Activated naive CD4-positive, alpha-beta T cell treated with anti-CD3 and anti-CD28 coated beads for 36 hours (primary cell): ENCODE measurements at regions of chr17 and their contacts with region 1.

Region 1: DNA sequence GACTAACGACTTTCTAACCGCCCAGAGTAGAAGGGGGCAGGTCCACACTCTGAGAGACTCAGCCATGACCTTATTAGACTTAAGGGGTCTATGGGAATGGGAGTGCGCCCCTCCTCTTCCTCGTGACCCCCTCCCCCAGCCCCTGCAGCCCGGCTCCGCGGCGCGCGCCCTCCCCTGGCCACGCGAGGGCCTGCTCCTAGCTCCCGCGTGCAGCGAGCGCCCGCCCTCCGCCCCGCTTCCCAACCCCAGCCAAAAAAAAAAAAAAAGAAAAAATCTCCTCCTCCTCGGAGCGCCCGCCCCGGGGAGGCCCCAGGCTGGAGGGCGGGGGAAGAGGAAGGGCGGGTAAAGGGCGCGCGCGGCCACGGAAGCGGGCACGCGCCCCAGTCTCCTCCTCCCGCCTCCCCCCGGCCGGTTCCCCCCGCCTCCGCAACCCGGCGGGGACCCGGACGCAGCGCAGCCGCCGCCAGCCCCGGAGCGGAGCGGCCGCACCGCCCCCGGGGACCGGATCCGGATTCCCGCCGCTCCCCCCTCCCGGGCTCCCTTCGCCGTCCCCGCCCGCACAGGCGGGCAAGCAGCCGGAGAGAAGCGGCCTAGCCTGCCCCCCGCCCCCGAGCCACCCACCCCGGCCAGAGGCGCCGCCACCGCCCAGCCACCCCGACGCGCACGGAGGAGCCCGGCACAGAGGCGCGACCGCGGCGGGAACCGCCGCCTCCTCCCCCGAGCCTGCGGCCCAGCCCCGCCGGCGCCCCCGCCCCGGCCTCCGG is 949 bp downstream of the UBTF start:
- DNase-seq: peak; percentile 89
- H3K4me3 Mint-ChIP-seq: peak overlapping the region; percentile 94
- H3K27ac Mint-ChIP-seq: peak overlapping the region; percentile 96
- H3K4me1 Mint-ChIP-seq: peaks cover 40% of the 10 kb centered on the region
- H3K27me3 Mint-ChIP-seq: no peaks in the 10 kb centered on the region

Region 2: GRCh38 chr17:42744806-42745617 is 1473.5 kb before region 1 on chr17 and contains the start of gene EZH1:
- CTCF ChIA-PET with region 1: no interaction called
- intact Hi-C with region 1: loop called (anchors 10 kb)
- DNase-seq: peak; percentile 93
- H3K4me3 Mint-ChIP-seq: peak within 1 kb of the TSS; percentile 90
- H3K27ac Mint-ChIP-seq: peak within 1 kb of the TSS; percentile 93
- H3K4me1 Mint-ChIP-seq: peaks cover 21% of the 10 kb centered on the region
- H3K27me3 Mint-ChIP-seq: peaks cover 6% of the 10 kb centered on the region
- total RNA-seq, gene EZH1: 31.9 to 34.0 TPM

Region 3: DNA sequence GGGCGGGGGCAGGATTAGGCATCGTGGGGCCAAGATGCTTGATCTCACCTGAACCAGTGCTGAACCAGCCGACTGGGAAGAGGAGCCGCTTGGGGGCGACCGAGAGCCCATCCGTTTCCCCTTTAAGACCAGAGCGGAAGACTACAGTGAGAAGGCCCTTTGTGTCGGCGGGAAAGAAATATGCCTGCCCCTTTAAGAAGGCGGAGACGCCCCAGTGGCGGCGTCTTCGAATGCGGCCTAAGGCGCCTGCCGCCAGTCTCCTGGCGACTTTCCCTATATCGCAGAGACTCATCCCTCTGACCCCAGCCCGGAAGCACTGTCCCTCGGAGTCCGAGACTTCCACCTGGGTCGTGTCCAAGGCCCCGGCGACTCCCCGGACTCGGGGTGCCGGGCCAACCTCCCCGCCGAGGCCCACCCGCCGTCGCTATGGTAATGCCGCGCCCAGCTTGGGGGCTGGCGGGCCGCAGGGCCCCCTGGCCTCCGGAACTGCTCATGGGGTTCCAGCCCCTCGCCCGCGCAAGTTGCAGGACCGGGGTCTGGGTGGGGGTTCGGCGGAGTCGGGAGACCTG is 76.7 kb before region 1 on chr17 and contains the start of gene HROB:
- CTCF ChIA-PET with region 1: interaction called, 3 read pairs
- intact Hi-C with region 1: loop called (anchors 5 kb)
- DNase-seq: peak; percentile 100
- H3K4me3 Mint-ChIP-seq: peak within 1 kb of the TSS; percentile 89
- H3K27ac Mint-ChIP-seq: peak within 1 kb of the TSS; percentile 87
- H3K4me1 Mint-ChIP-seq: peaks cover 21% of the 10 kb centered on the region
- H3K27me3 Mint-ChIP-seq: no peaks in the 10 kb centered on the region
- total RNA-seq, gene HROB: 16.9 to 17.6 TPM

Region 4: GRCh38 chr17:44199553-44200477 is 18.7 kb before region 1 on chr17 and contains the start of gene ATXN7L3:
- CTCF ChIA-PET with region 1: interaction called, 9 read pairs
- intact Hi-C with region 1: loop called (anchors 1 kb)
- DNase-seq: peak; percentile 100
- H3K4me3 Mint-ChIP-seq: peak within 1 kb of the TSS; percentile 86
- H3K27ac Mint-ChIP-seq: peak within 1 kb of the TSS; percentile 91
- H3K4me1 Mint-ChIP-seq: peaks cover 36% of the 10 kb centered on the region
- H3K27me3 Mint-ChIP-seq: no peaks in the 10 kb centered on the region
- total RNA-seq, gene ATXN7L3: 53.3 to 53.9 TPM

Region 5: GRCh38 chr17:44324571-44325275 is 106.2 kb after region 1 on chr17 and contains the start of gene SLC25A39:
- CTCF ChIA-PET with region 1: interaction called, 64 read pairs
- intact Hi-C with region 1: loop called (anchors 1 kb)
- DNase-seq: peak; percentile 93
- H3K4me3 Mint-ChIP-seq: peak within 1 kb of the TSS; percentile 87
- H3K27ac Mint-ChIP-seq: peak within 1 kb of the TSS; percentile 87
- H3K4me1 Mint-ChIP-seq: peaks cover 30% of the 10 kb centered on the region
- H3K27me3 Mint-ChIP-seq: no peaks in the 10 kb centered on the region
- total RNA-seq, gene SLC25A39: 146 to 149 TPM

Region 6: GRCh38 chr17:45228763-45229539 is 1010.4 kb after region 1 on chr17:
- CTCF ChIA-PET with region 1: no interaction called
- intact Hi-C with region 1: loop called (anchors 10 kb)
- DNase-seq: peak; percentile 96
- H3K4me3 Mint-ChIP-seq: peak overlapping the region; percentile 100
- H3K27ac Mint-ChIP-seq: peak overlapping the region; percentile 100
- H3K4me1 Mint-ChIP-seq: peaks cover 82% of the 10 kb centered on the region
- H3K27me3 Mint-ChIP-seq: no peaks in the 10 kb centered on the region